Calu3 (cell line): ENCODE measurements at regions of chr3 and their contacts with region 1.

Region 1: DNA sequence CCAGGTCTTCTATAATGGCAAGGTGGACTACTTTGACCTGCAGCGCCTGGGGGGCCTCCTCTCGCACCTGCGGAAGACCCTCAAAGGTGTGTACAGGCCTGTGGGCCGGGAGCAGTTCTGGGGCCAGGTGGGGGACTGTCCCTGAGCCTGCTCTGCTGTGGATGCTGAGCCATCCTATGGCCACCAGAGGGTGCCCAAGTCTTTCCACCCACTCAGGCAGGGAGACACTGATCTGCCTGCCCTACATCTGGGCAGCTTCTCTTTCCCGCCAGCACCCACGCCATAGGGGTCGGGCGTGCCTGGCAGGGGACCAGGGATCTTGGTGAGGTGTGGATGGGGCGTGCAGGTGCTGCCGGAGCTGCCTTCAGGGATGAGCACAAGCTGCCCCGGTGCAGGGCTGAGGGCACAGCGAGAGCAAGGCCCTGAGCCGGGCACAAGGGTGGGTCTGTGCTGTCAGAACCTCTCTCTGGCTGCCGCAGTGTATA is 14.1 kb downstream of the RNF123 start:
- DNase-seq: peak; percentile 68
- H3K4me3 Mint-ChIP-seq: no peak overlapping the region
- H3K27ac Mint-ChIP-seq: no peak overlapping the region
- H3K4me1 Mint-ChIP-seq: no peaks in the 10 kb centered on the region
- H3K27me3 Mint-ChIP-seq: no peaks in the 10 kb centered on the region
- CTCF ChIP-seq: peak; percentile 84

Region 2: GRCh38 chr3:49839193-49839809 is 135.8 kb after region 1 on chr3:
- CTCF ChIA-PET with region 1: interaction called, 11 read pairs
- intact Hi-C with region 1: loop called (anchors 2 kb)
- DNase-seq: peak; percentile 73
- H3K4me3 Mint-ChIP-seq: no peak overlapping the region
- H3K27ac Mint-ChIP-seq: no peak overlapping the region
- H3K4me1 Mint-ChIP-seq: peaks cover 9% of the 10 kb centered on the region
- H3K27me3 Mint-ChIP-seq: no peaks in the 10 kb centered on the region
- CTCF ChIP-seq: peak; percentile 54